Heart left ventricle (tissue), 16 donors: ENCODE measurements at regions of chr15 and their contacts with region 1.

Region 1: DNA sequence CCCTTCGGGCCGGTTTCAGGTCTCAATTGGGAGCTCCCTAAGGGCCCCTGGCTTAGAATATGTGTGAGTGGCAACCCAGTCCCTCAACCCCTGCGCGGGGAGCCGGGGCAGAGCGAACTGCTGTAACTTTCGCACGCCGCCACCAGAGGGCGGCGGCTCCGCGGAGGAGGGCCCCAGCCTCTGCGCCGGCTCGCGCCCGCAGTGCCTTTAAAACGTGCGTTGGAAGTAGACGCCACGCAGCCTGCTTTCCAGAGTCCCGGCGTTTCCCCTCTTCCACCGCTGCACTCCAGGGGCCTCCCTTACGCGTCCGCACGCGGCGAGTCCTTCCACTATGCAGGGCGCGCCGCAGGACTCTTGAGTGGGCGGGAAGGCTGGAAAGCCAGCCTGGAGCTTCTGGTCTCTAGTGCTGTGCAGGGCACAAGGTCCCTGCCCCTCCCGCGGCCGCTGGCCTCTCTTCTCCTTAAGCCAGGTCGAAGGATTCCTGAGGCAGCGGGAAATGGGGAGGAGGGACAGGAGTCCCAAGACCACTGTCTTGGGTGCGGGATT is 23.7 kb upstream of the RNU6-1 start:
- DNase-seq: peak; percentile 71 to 93 (median 85)
- ATAC-seq: peak; percentile 86 to 98 (median 97)
- H3K4me3 ChIP-seq: peak overlapping the region in 11 of 12 donors; percentile 4 to 61 (median 53)
- H3K27ac ChIP-seq: peak overlapping the region in 6 of 12 donors; percentile 5 to 75 (median 38)
- H3K4me1 ChIP-seq: peaks cover 0 to 15% (median 10%) of the 10 kb centered on the region in 12 donors
- H3K27me3 ChIP-seq: peaks cover 0 to 2% (median 0%) of the 10 kb centered on the region in 9 donors
- CTCF ChIP-seq: peak; percentile 84 to 99 (median 94)
- POLR2A ChIP-seq: no peak

Region 2: GRCh38 chr15:66619151-66619903 is 1244.2 kb before region 1 on chr15:
- intact Hi-C with region 1: no loop called
- DNase-seq: peak; percentile 73 to 85 (median 77)
- ATAC-seq: peak; percentile 53 to 75 (median 72)
- H3K4me3 ChIP-seq: no peak overlapping the region
- H3K27ac ChIP-seq: peak overlapping the region in 11 of 12 donors; percentile 1 to 87 (median 70)
- H3K4me1 ChIP-seq: peaks cover 0 to 66% (median 38%) of the 10 kb centered on the region in 12 donors
- H3K27me3 ChIP-seq: peaks cover 0 to 10% (median 0%) of the 10 kb centered on the region in 9 donors
- CTCF ChIP-seq: peak; percentile 81 to 96 (median 92)
- POLR2A ChIP-seq: no peak

Region 3: DNA sequence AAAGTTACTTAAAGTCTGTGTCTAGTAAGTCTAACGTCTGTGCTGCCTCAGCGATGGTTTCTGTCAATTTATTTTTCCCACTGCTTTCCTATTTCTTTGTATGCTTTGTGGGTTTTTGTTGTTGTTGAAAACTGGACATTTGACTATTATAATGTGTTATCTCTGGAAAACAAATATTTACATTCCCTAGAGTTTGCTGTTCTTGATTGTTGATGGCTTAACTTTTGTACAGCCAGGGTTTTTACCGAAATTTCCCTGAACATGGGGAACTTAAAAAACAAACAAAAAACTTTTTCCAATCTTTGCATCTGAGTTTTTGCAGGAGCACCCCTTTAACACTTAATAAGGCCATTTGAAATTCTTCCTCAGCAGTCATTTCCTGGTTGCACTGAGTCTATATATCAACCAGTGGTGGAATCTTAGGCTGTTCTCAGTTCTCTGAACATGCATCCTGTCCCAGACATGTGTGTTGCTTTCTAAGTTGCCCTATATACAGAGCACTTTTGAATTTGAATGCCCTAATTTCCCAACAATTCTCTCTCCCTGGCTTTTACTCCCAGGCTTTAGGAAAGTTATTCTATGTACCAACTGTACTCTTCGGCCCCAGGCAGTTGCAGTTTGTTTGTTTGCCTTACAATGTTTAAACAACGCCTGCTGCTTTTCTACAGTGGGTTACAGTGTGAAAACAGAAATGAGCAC is 178.8 kb after region 1 on chr15:
- intact Hi-C with region 1: loop called in 1 of 10 experiments (anchors 10 kb)
- DNase-seq: no peak
- ATAC-seq: no peak
- H3K4me3 ChIP-seq: no peak overlapping the region
- H3K27ac ChIP-seq: peak overlapping the region in 1 of 12 donors; percentile 0
- H3K4me1 ChIP-seq: no peaks in the 10 kb centered on the region
- H3K27me3 ChIP-seq: no peaks in the 10 kb centered on the region
- CTCF ChIP-seq: no peak
- POLR2A ChIP-seq: no peak

Region 4: GRCh38 chr15:68154923-68155559 is 291.5 kb after region 1 on chr15:
- intact Hi-C with region 1: loop called (anchors 1 to 5 kb)
- DNase-seq: peak in 3 of 5 donors; percentile 32 to 41 (median 38)
- ATAC-seq: peak in 3 of 4 donors; percentile 34 to 63 (median 58)
- H3K4me3 ChIP-seq: no peak overlapping the region
- H3K27ac ChIP-seq: no peak overlapping the region
- H3K4me1 ChIP-seq: peaks cover 0 to 11% (median 4%) of the 10 kb centered on the region in 12 donors
- H3K27me3 ChIP-seq: no peaks in the 10 kb centered on the region
- CTCF ChIP-seq: peak; percentile 56 to 90 (median 80)
- POLR2A ChIP-seq: no peak

Region 5: GRCh38 chr15:68204776-68205557 is 341.5 kb after region 1 on chr15 and contains the start of gene CALML4:
- intact Hi-C with region 1: loop called in 8 of 10 experiments (anchors 2 to 5 kb)
- DNase-seq: peak; percentile 64 to 84 (median 76)
- ATAC-seq: peak; percentile 43 to 77 (median 64)
- H3K4me3 ChIP-seq: peak within 1 kb of the TSS in 9 of 12 donors; percentile 6 to 51 (median 20)
- H3K27ac ChIP-seq: peak within 1 kb of the TSS in 8 of 12 donors; percentile 2 to 85 (median 64)
- H3K4me1 ChIP-seq: peaks cover 0 to 50% (median 22%) of the 10 kb centered on the region in 12 donors
- H3K27me3 ChIP-seq: no peaks in the 10 kb centered on the region
- CTCF ChIP-seq: no peak
- POLR2A ChIP-seq: no peak
- total RNA-seq, gene CALML4: 0.21 to 6.6 (median 1.5) TPM

Region 6: GRCh38 chr15:68210821-68211655 is 347.5 kb after region 1 on chr15:
- intact Hi-C with region 1: loop called in 8 of 10 experiments (anchors 2 to 5 kb)
- DNase-seq: peak; percentile 55 to 83 (median 67)
- ATAC-seq: peak; percentile 22 to 68 (median 60)
- H3K4me3 ChIP-seq: peak overlapping the region in 2 of 12 donors; percentile 22 to 27
- H3K27ac ChIP-seq: no peak overlapping the region
- H3K4me1 ChIP-seq: peaks cover 0 to 52% (median 9%) of the 10 kb centered on the region in 12 donors
- H3K27me3 ChIP-seq: no peaks in the 10 kb centered on the region
- CTCF ChIP-seq: peak; percentile 73 to 89 (median 83)
- POLR2A ChIP-seq: no peak

Region 7: GRCh38 chr15:68252925-68253534 is 389.5 kb after region 1 on chr15:
- intact Hi-C with region 1: no loop called
- DNase-seq: no peak
- ATAC-seq: peak in 3 of 4 donors; percentile 29 to 45 (median 40)
- H3K4me3 ChIP-seq: no peak overlapping the region
- H3K27ac ChIP-seq: peak overlapping the region in 1 of 12 donors; percentile 2
- H3K4me1 ChIP-seq: peaks cover 0 to 19% (median 5%) of the 10 kb centered on the region in 12 donors
- H3K27me3 ChIP-seq: no peaks in the 10 kb centered on the region
- CTCF ChIP-seq: peak; percentile 80 to 93 (median 87)
- POLR2A ChIP-seq: no peak